ENCODE measurements at regions of chr3 and their contacts with region 1.

Region 1: GRCh38 chr3:118884748-118885206 is 149.9 kb downstream of the IGSF11 start:
- DNase-seq: no peak
- H3K4me3 ChIP-seq: no peak overlapping the region
- H3K27me3 ChIP-seq: no peaks in the 10 kb centered on the region
- CTCF ChIP-seq: peak; percentile 94

Region 2: GRCh38 chr3:118868051-118868450 is 16.7 kb before region 1 on chr3:
- CTCF ChIA-PET with region 1: interaction called, 34 read pairs
- POLR2A ChIA-PET with region 1: no interaction called
- DNase-seq: no peak
- H3K4me3 ChIP-seq: no peak overlapping the region
- H3K27me3 ChIP-seq: no peaks in the 10 kb centered on the region
- CTCF ChIP-seq: no peak

Region 3: GRCh38 chr3:119034256-119035013 is 149.7 kb after region 1 on chr3 and contains the start of gene IGSF11:
- CTCF ChIA-PET with region 1: interaction called, 35 read pairs
- POLR2A ChIA-PET with region 1: no interaction called
- DNase-seq: no peak
- H3K4me3 ChIP-seq: peak within 1 kb of the TSS; percentile 51
- H3K27me3 ChIP-seq: peaks cover 13% of the 10 kb centered on the region
- CTCF ChIP-seq: no peak
- polyA plus RNA-seq, gene IGSF11: 0.05 and 0.20 TPM in 2 replicates

Region 4: DNA sequence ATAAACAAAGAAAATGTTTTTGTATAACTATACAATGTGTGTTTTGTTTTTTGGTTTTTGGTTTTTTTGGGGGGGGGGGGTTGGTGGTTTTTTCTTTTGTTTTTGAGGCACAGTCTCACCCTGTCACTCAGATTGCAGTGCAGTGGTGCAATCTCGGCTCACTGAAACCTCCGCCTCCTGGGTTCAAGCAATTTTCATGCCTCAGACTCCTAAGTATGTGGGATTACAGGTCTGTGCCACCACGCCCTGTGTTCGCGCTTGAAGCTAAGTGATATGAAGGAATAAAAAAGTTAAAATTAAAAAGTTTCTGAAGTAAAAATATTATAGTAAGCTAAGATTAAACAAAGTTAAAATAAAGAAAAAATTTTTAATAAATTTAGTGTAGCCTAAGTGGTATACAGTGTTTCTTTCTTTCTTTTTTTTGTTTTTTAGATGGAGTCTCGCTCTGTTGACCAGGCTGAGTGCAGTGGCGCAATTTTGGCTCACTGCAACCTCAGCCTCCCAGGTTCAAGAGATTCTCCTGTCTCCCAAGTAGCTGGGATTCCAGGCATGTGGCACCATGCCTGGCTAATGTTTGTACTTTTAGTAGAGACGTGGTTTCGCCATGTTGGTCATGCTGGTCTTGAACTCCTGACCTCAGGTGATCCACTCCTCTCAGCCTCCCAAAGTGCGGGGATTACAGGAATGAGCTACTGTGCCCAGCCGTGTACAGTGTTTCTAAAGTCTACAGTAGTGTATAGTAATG is 207.3 kb after region 1 on chr3:
- CTCF ChIA-PET with region 1: interaction called, 84 read pairs
- POLR2A ChIA-PET with region 1: no interaction called
- DNase-seq: no peak
- H3K4me3 ChIP-seq: no peak overlapping the region
- H3K27me3 ChIP-seq: no peaks in the 10 kb centered on the region
- CTCF ChIP-seq: no peak

Region 5: DNA sequence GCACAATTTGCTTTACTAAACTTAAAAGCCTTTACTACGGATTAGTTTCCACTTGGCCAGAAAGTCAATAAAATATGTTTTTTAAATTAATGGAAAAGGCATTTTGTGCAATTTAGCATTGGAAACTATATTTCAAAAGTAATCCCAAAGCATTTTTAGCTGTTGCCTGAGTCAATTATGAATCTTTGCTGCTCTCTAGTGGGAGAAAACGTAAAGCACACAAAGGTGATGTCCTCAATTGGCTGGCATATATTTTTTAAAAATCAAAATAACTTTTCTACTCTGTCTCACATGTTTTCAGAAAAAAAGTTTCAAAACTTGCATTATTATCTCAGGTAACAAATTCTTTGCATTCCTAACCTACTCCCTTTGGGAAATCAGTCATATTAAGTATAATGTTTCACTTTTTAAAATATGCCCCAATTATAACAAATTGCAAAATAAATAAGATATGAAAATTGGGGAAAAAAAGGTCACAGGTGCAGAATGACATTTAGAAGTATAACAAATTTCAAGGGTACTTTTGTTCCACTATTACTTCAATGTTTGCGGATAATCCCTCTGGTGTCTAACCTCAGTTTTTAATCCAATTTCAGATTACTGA is 213.9 kb after region 1 on chr3:
- CTCF ChIA-PET with region 1: interaction called, 84 read pairs
- POLR2A ChIA-PET with region 1: no interaction called
- DNase-seq: peak; percentile 3
- H3K4me3 ChIP-seq: no peak overlapping the region
- H3K27me3 ChIP-seq: no peaks in the 10 kb centered on the region
- CTCF ChIP-seq: peak; percentile 76

Region 6: DNA sequence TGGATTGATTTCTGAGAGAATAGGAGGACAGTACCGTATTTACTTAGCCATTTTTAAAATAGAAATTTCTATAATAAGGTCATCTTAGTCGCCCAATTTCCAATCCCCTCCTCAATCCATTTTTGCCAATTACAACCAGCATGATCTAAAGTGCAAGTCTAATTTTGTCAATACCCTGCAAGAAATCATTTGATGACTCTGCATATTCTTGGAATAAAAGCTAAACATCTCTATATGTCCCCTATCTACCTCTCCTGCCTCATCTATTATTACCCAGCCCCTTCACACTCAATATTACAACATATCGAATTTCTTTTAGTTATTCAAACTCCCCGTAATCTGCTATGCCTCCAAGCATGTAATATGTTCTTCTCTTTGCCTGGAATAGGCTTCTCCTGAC is 219.3 kb after region 1 on chr3:
- CTCF ChIA-PET with region 1: interaction called, 84 read pairs
- POLR2A ChIA-PET with region 1: no interaction called
- DNase-seq: no peak
- H3K4me3 ChIP-seq: no peak overlapping the region
- H3K27me3 ChIP-seq: no peaks in the 10 kb centered on the region
- CTCF ChIP-seq: no peak

Region 7: GRCh38 chr3:119240591-119241434 is 356.0 kb after region 1 on chr3 and contains the start of gene B4GALT4:
- CTCF ChIA-PET with region 1: interaction called, 31 read pairs
- POLR2A ChIA-PET with region 1: no interaction called
- DNase-seq: no peak
- H3K4me3 ChIP-seq: peak within 1 kb of the TSS; percentile 55
- H3K27me3 ChIP-seq: no peaks in the 10 kb centered on the region
- CTCF ChIP-seq: no peak
- polyA plus RNA-seq, gene B4GALT4: 20.9 and 30.2 TPM in 2 replicates

Measured in BJ (cell line).